ENCODE measurements at regions of chr2 and their contacts with region 1.

Region 1: DNA sequence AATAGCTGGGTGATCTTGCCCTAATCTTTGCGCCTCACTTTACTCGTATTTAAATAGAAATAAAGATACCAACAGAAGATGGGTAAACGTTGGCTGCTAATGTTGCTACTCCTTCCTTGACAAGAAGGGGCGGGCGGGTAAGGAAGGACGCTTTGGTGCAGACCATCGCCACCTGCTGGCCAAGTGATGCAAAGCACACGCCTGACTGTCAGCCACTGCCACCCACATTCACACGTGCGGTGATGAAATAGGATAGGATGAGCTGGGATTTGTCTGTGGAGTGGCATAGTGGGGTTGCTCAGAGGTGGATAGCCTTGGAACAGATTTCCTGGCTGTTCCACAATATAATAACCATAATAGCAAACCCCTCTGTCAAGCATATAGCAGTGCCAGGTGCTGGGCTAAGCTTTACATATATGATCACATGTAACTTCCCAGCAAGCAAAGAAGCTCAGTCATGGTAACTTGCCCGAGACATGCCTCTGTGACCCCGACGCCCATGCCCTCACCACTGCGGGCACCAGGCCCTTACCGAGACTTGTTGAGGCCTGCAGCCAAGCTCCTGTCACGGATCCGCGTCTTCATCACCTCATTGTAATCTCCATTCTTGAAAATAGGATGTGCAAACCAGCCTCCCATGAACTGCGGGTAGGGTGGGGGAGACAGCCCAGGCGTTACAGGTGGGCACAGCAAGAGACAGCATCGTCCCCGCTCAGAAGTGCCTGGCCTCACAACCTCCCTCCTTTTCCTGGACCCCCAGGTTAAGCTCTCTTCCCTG is 39.3 kb downstream of the LCT start:
- DNase-seq: peak; percentile 84
- H3K4me3 ChIP-seq: peak overlapping the region in 1 of 2 experiments; percentile 27; a peak in 1 of 4 replicates
- H3K27ac ChIP-seq: no peak overlapping the region
- H3K4me1 ChIP-seq: no peaks in the 10 kb centered on the region; a peak in 1 of 4 replicates
- H3K27me3 ChIP-seq: no peaks in the 10 kb centered on the region
- CTCF ChIP-seq: peak; percentile 94
- EP300 ChIP-seq: no peak
- RAD21 ChIP-seq: peak; percentile 65

Region 2: GRCh38 chr2:134988994-134989605 is 808.6 kb before region 1 on chr2:
- CTCF ChIA-PET with region 1: interaction called, 17 read pairs
- POLR2A ChIA-PET with region 1: no interaction called
- DNase-seq: peak; percentile 42
- H3K4me3 ChIP-seq: no peak overlapping the region
- H3K27ac ChIP-seq: no peak overlapping the region
- H3K4me1 ChIP-seq: no peaks in the 10 kb centered on the region
- H3K27me3 ChIP-seq: no peaks in the 10 kb centered on the region
- CTCF ChIP-seq: peak; percentile 66
- EP300 ChIP-seq: no peak
- RAD21 ChIP-seq: peak; percentile 72

Region 3: GRCh38 chr2:135762022-135762421 is 35.7 kb before region 1 on chr2:
- CTCF ChIA-PET with region 1: interaction called, 15 read pairs
- POLR2A ChIA-PET with region 1: no interaction called
- DNase-seq: no peak
- H3K4me3 ChIP-seq: no peak overlapping the region
- H3K27ac ChIP-seq: no peak overlapping the region
- H3K4me1 ChIP-seq: peaks cover 0 to 8% of the 10 kb centered on the region in 2 experiments; a peak in 1 of 4 replicates
- H3K27me3 ChIP-seq: no peaks in the 10 kb centered on the region
- CTCF ChIP-seq: no peak
- EP300 ChIP-seq: no peak
- RAD21 ChIP-seq: no peak

Region 4: DNA sequence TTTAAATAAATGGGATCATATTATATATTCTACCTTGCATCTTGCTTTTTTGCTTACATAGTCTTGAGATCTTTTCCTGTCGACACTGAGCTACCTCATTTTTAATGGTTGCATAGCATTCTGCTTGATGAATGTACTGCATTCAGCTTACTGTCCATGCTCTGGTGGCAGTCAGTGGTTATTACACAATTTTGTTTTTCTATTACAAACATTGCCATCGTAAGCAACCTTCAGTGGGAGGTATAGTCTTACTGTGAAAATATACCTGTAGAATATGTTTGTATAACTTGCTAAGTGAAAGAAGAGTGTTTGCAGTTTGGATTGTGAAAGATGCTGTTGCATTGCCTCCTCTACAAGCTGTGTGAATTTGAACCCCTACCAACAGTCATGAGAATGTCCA is 12.7 kb before region 1 on chr2:
- CTCF ChIA-PET with region 1: interaction called, 62 read pairs
- POLR2A ChIA-PET with region 1: no interaction called
- DNase-seq: no peak
- H3K4me3 ChIP-seq: no peak overlapping the region
- H3K27ac ChIP-seq: no peak overlapping the region
- H3K4me1 ChIP-seq: no peaks in the 10 kb centered on the region
- H3K27me3 ChIP-seq: no peaks in the 10 kb centered on the region
- CTCF ChIP-seq: no peak; the same call in 1 of the 2 replicates
- EP300 ChIP-seq: no peak
- RAD21 ChIP-seq: no peak

Region 5: DNA sequence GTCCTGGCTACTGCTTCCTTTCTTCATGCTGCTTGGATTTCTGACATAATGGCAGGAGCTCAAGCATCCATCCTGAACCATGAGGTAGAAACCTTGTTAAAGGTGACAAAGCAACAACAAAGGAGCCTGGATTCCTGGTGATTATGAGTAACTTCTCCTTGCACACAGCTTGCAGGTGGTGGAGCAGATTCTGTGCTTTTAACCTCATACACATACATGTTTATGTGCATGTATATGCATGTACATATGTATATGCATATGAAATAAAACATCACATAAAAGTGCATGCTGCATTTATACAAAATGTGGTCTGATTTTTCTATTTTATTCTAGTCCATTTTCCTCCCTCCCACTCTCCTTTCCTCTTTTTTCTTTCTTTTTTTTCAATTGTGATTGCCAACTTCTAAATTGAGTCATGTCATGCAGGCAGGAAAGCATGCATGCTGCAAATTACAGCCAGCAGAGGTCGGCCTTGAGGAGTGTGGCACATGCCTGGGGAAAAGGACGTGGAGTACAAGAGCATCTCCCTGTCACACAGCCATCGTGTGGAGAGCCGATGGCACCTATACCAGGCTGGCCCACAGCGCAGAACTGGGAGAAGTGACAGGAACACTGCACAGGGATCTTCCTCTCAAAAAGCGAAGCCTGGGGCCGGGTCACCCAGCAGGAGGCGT is 21.4 kb after region 1 on chr2:
- CTCF ChIA-PET with region 1: interaction called, 25 read pairs
- POLR2A ChIA-PET with region 1: no interaction called
- DNase-seq: no peak
- H3K4me3 ChIP-seq: no peak overlapping the region
- H3K27ac ChIP-seq: no peak overlapping the region
- H3K4me1 ChIP-seq: peaks cover 0 to 4% of the 10 kb centered on the region in 2 experiments; a peak in 1 of 4 replicates
- H3K27me3 ChIP-seq: no peaks in the 10 kb centered on the region
- CTCF ChIP-seq: peak; percentile 42
- EP300 ChIP-seq: no peak
- RAD21 ChIP-seq: peak; percentile 28; the same call in 1 of the 2 replicates

Measured in SK-N-SH (cell line).